ENCODE measurements at regions of chr18 and their contacts with region 1.

Region 1: DNA sequence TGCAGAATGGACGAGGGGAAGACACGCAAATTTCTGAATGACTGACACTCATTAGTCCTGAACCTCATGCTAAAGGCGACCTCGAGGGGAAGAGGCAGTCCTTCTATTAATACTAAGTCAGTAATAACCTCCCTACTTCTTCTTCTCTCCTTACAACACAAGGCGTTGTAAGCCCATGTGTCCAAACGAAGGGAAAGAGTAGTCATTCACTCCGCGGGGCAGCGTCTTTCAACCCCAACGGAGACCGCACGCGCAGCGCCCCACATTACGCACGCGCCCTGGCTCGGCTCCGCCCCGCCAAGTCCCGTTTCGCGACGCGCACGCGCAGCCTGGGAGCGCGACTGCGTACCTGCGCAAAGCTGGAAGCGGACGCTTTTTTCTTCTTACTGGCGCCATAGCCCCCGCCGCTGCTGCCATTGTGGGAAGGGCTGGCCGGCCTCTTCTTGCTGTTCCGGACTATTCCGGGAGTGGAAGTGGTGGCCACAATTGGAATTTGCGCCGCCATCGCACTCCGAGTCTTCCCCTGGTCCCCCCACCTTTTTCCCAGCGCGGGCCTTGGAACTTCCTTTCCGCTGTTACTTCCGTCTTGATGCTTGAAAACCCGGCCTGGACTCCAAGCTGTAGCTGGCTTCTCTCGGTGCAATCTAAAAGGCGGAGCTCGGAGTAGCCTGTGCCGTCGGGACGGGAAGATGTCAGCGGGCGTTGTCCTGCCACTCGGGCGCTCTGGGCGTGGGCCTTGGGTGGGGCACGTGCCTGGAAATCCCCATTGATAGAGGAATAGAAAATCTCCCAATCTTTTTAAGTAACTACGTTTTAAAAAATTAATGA is at the start of gene INO80C:
- DNase-seq: peak; percentile 78
- H3K4me3 ChIP-seq: peak within 1 kb of the TSS; percentile 76
- CTCF ChIP-seq: no peak

Region 2: DNA sequence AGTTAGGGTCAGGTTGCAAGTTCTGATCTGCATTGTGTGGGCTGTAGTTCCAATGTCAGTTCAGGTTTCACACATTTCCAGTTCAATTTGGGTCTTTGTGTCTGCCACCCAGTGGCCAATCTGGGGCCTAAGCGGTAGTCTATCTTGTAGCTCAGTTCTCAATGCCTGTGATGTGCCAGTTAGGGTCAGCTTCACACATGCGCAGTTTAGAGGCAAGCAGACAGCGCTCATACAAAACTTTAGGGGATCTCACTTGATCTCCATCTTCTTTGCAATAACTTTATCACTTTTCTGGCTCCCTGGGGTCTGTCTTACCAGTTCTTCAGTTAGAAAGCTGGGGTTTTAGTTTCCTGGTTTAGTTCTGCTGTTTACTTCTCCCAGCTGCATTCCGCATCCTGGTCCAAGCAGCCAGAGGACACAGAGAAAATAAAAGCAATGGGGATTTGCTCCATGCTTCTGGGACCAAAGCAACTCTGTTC is 142.4 kb before region 1 on chr18:
- CTCF ChIA-PET with region 1: no interaction called
- POLR2A ChIA-PET with region 1: no interaction called
- DNase-seq: peak; percentile 36
- H3K4me3 ChIP-seq: no peak overlapping the region
- CTCF ChIP-seq: peak; percentile 79

Region 3: GRCh38 chr18:35478520-35479435 is 18.8 kb before region 1 on chr18:
- CTCF ChIA-PET with region 1: no interaction called
- POLR2A ChIA-PET with region 1: interaction called, 12 read pairs
- DNase-seq: no peak
- H3K4me3 ChIP-seq: no peak overlapping the region
- CTCF ChIP-seq: no peak

Measured in AG04449 (cell line).